GM10248 (cell line): ENCODE measurements at regions of chr15 and their contacts with region 1.

Region 1: DNA sequence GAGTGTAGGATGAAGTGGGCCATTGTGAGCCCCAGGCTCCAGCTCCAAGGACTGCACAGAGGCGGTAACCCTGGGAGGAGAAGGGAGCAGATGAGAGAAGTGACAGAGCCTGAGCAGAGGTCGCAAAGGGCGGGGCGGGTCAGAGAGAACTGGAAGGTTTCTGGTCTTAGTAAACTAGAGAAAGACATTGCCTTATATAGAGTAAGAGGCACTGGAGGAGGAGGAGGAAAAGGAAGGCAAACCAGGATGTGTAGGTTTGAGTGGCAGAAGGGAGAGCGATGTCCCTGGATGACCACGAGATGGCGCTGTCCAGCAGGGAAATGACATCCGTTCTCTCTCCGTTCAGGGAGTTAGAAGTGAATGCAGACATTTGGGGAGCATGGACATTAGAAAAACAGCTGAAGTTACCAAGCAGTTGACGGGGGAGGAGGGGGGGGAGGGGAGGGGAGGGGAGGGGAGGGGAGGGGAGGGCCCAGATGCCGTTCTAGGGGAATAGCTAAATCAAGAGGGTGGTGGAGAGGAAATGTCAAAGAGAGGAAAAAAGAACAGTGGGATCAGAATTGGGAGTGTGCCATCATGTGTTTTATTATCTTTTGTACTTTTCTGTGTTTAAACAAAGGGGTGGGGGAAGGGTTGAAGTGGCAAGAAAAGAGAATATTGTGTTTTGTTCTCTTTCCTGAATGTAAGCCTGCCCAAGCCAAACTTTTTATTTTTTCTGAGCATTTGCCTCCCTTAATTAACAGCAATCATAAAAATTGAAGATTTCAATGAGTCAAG is 48.8 kb downstream of the STARD5 start:
- DNase-seq: peak; percentile 76
- CTCF ChIP-seq: peak; percentile 93

Region 2: DNA sequence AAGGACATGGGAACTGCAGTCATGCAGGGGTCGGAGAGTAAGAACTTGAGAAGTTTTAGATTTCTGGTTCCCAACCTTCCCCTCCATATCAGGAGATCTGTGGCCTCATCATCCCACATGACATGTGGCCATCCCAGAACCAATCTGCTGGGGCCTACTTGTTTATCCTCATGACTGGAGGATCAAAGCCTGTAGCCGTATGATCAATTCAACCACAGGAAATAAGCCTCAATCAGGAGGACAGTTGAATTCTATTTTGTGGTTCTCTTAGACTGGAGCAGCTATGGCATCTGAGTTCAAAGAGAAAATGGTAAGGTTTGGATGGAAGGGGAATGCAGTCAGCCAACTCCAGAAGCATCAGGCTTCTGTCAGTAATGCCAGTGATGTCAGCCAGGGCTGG is 21.3 kb before region 1 on chr15:
- CTCF ChIA-PET with region 1: no interaction called
- POLR2A ChIA-PET with region 1: no interaction called
- DNase-seq: no peak
- CTCF ChIP-seq: no peak

Region 3: GRCh38 chr15:81286621-81287121 is 11.6 kb after region 1 on chr15:
- CTCF ChIA-PET with region 1: interaction called, 73 read pairs
- POLR2A ChIA-PET with region 1: no interaction called
- DNase-seq: no peak
- CTCF ChIP-seq: no peak

Region 4: DNA sequence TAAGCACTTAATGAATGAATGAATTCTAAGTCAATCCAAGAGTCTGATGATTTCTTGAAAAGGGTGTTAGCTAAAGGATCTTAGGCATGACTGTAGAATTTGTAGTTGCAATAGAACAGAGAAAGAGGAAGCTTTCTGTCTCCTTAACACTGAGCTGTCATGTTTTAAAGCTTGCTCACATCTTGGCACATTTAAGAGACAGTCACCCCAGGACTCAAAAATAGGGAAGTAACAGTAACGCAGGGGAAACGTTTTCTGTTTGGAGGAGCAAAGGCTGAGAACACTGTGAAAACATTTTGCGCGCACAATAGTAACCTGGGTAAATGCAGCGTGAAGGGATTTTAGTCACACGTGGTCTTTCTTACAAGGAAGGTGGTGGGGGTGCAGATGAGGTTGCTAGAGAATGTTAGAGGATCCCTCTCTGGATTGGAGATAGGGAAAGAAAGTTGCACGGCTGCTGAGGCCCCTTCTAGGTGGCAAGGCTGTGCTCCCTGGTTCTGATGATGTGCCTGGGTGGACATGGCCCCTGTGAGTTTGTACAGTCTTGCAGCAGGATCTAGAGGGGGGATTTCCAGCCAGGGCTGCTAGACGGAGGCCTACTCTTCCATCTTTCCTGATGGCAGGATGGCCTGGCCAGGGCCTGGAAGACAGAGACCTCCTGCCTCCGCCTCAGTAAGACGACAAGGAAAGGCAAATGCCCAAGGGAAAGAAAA is 36.8 kb after region 1 on chr15:
- CTCF ChIA-PET with region 1: interaction called, 12 read pairs
- POLR2A ChIA-PET with region 1: no interaction called
- DNase-seq: peak; percentile 47
- CTCF ChIP-seq: no peak

Region 5: GRCh38 chr15:81336568-81336967 is 61.4 kb after region 1 on chr15:
- CTCF ChIA-PET with region 1: interaction called, 82 read pairs
- POLR2A ChIA-PET with region 1: no interaction called
- DNase-seq: peak; percentile 47
- CTCF ChIP-seq: peak; percentile 45

Region 6: GRCh38 chr15:81400640-81401236 is 125.6 kb after region 1 on chr15:
- CTCF ChIA-PET with region 1: interaction called, 52 read pairs
- POLR2A ChIA-PET with region 1: no interaction called
- DNase-seq: peak; percentile 40
- CTCF ChIP-seq: peak; percentile 49